GM10248 (cell line): ENCODE measurements at regions of chr11 and their contacts with region 1.

Region 1: DNA sequence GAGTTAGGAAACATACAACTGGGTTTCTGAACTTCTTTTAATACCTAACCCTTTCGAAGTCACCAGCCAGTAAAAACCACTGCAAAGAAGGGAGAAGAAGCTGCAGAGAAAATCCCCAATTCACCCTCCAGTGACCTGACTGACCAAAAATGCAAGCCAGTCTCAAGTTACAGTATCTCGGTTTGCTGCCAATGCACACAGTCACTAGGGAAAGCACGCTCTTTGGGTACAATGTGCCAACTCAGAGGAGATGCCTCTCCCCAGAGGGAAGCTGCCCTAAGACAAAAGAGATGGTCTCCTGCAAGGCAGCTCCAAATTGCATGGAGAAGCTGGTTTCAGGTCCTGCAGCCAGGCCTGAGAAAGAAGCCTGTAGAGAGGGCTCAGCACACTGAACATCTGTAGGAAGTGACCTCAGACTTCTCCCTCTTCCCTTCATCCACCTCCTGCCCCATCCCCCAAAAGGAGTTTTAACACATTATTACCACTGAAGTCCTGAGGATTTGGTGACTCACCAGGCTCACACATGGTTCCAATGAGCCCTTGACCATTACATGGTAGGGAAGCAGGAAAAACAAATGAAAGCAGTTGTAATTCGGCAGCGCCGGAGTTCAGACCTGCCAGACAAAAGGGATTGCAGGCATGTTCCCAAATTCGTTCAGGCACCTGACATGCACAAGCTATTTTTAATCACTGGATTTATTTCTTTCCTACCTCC is 90.1 kb downstream of the ETS1 start:
- DNase-seq: peak; percentile 41
- CTCF ChIP-seq: no peak

Region 2: DNA sequence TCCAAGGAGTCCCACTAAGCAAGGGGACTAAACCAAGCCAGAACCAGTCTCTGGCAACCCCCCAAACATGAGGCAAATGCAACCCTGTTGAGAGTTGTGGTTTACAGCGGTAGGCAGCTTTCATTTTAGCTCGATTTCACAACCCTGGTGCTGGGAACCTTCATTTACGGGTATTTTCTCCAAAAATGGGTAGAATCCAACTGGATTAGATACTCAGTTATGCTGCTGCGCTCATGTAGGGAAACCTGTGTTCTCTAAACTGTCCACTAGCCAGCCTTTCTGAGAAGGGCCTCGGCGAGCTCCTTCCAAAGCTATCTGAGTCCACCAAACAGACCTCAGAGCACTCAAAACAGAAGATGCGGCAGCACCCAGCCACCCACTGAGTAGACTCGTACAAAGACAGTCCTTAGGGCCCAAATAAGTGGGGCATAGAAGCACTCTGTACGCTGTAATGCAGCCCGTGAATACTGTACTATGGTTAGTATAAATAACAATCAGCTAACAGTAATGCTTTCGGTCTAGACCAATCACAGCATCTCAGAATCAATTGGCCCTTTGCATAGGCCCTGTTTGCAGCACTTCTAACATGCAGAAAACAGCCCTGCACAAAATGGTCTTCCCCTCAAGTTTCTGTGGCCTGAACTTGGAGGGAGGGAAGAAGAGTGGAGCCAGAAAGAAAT is 14.6 kb before region 1 on chr11:
- CTCF ChIA-PET with region 1: interaction called, 19 read pairs
- POLR2A ChIA-PET with region 1: no interaction called
- DNase-seq: no peak
- CTCF ChIP-seq: no peak

Region 3: DNA sequence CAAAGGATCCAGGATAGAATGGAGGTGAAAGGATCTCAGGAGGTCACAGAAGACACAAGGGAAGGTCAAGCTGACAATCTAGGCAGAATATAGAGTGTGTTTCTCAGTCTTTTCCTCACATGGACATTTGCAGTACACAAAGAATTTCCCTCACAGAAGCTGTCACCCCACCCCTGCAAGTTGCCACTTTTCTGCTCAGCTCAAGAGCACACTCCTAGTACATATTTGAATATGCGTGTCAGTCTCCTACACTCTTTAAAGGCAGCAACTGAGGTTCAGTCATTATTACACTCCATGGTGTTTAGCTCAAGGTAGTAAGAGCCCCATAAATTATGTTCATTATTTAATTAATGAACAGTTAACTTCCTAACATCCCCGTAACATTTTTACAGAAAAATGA is 31.1 kb after region 1 on chr11:
- CTCF ChIA-PET with region 1: no interaction called
- POLR2A ChIA-PET with region 1: no interaction called
- DNase-seq: no peak
- CTCF ChIP-seq: no peak